ENCODE measurements at regions of chr17 and their contacts with region 1.

Region 1: GRCh38 chr17:9522074-9522473 is 53.5 kb downstream of the STX8 start:
- DNase-seq: peak in 1 of 5 donors; percentile 16
- ATAC-seq: peak in 3 of 4 donors; percentile 69 to 74 (median 74)
- H3K4me3 ChIP-seq: no peak overlapping the region
- H3K27ac ChIP-seq: no peak overlapping the region
- H3K4me1 ChIP-seq: peaks cover 0 to 18% (median 4%) of the 10 kb centered on the region in 12 donors
- H3K27me3 ChIP-seq: no peaks in the 10 kb centered on the region
- CTCF ChIP-seq: peak; percentile 9 to 65 (median 48)
- POLR2A ChIP-seq: no peak

Region 2: DNA sequence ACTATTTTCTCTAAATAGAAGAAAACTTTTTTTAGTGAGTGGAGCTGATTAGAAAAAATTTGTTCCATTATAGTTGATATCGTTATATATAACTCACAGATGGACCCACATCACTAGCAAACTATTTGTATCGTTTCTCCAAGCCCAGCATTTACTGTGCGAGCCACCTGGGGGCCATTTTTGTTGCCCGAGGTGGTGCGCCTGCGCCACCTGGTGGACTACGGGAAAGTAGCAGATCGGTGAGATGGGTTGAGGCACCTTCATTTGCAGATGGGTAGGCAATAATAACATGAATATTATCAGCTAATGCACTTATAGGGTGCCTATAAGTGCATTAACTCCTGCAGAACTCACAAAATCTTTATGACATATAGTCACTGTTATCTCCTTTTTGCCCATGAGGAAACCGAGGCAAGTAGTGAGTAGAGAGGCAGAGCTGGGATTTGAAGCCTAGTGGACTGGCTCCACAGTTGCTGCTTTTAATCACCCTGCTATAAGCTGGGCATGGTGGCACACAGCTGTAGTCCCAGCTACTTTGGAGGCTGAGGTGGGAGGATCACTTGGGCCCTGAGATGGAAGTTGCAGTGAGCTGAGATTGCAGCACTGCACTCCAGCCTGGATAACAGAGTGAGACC is 524.0 kb before region 1 on chr17:
- intact Hi-C with region 1: loop called in 8 of 10 experiments (anchors 2 to 5 kb)
- DNase-seq: peak; percentile 38 to 82 (median 44)
- ATAC-seq: peak in 3 of 4 donors; percentile 54 to 61 (median 54)
- H3K4me3 ChIP-seq: no peak overlapping the region
- H3K27ac ChIP-seq: no peak overlapping the region
- H3K4me1 ChIP-seq: peaks cover 0 to 10% (median 2%) of the 10 kb centered on the region in 12 donors
- H3K27me3 ChIP-seq: peaks cover 0 to 30% (median 0%) of the 10 kb centered on the region in 9 donors
- CTCF ChIP-seq: peak; percentile 68 to 93 (median 78)
- POLR2A ChIP-seq: no peak

Region 3: GRCh38 chr17:10156948-10157607 is 635.0 kb after region 1 on chr17:
- intact Hi-C with region 1: no loop called
- DNase-seq: peak; percentile 52 to 74 (median 66)
- ATAC-seq: peak; percentile 42 to 82 (median 68)
- H3K4me3 ChIP-seq: no peak overlapping the region
- H3K27ac ChIP-seq: peak overlapping the region in 8 of 12 donors; percentile 33 to 94 (median 48)
- H3K4me1 ChIP-seq: peaks cover 0 to 46% (median 7%) of the 10 kb centered on the region in 12 donors
- H3K27me3 ChIP-seq: no peaks in the 10 kb centered on the region
- CTCF ChIP-seq: no peak
- POLR2A ChIP-seq: no peak

Measured in heart left ventricle (tissue), 16 donors.